Activated CD4-positive, alpha-beta memory T cell treated with anti-CD3 and anti-CD28 coated beads, Interleukin-2, amount 10 ng/mL, durations not matched to agents 7 days and 5 days (primary cell): ENCODE measurements at regions of chr1 and their contacts with region 1.

Region 1: DNA sequence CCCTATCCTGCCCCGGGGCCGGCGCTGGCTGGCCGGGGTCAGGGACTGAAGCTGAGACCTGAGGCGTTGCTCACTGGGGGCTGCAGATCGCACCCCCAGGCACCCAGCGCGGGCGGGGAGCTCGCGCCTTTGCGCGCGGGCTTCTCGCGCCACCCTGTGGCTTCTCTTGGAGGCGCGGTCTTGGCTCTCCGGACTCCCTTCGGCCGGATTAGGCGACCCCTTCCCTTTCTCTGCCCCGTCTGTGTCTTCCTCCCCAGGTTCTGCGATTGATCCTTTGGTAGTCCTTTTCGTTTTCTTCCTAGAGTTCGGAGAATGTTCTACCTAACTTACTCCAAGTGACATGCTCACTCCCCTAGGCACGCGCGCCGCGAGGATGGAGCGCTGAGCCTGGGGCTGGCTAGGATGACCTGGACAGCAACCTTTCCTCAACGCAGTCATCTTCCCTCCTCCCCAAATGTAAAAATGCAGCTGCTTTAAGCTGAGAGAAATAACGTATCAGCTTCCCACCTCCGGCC is 495 bp upstream of the NTRK1 start:
- DNase-seq: peak; percentile 64
- H3K4me3 Mint-ChIP-seq: peak overlapping the region; percentile 74
- H3K27ac Mint-ChIP-seq: no peak overlapping the region
- H3K4me1 Mint-ChIP-seq: peaks cover 52% of the 10 kb centered on the region
- H3K27me3 Mint-ChIP-seq: peaks cover 72% of the 10 kb centered on the region

Region 2: DNA sequence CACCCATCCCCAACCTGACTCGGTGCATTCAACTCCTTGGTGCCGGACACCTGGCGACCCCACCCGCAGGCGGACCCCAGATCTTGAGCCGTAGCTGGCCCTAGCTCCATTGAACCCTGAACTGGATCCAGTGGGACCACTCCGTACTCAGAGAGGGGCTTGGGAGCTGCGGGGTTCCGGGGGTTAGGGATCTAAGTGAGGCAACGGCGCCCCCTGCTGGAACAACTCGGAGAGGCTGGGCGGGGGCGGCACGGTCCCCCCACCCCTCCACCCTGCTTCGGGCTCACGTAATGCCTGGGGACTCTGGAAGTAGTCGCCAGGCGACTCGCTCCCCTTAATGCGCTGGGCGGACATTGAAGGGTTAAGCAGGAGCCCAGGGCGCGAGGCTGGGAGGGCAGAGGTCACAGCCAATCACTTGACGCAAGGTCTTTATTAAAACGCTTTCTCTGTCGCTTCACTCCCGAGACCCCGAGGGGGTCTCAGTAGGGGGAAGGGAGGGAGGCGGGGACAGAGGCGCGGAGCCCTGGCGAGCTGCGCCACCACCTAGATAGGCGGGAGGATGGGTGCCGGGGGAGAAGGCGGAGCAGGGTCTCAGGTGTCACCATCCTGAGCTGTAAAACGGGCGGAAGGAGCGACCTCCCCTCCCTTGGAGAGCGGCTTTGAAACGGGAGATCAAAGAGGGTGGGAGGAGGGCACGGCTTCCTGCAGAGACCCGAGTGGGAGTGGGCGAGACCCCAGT is 154.1 kb before region 1 on chr1:
- CTCF ChIA-PET with region 1: interaction called, 19 read pairs
- POLR2A ChIA-PET with region 1: no interaction called
- DNase-seq: peak; percentile 69
- H3K4me3 Mint-ChIP-seq: peak overlapping the region; percentile 70
- H3K27ac Mint-ChIP-seq: no peak overlapping the region
- H3K4me1 Mint-ChIP-seq: peaks cover 21% of the 10 kb centered on the region
- H3K27me3 Mint-ChIP-seq: peaks cover 38% of the 10 kb centered on the region

Region 3: GRCh38 chr1:156767101-156767878 is 92.9 kb before region 1 on chr1 and contains the start of gene PRCC:
- CTCF ChIA-PET with region 1: interaction called, 16 read pairs
- POLR2A ChIA-PET with region 1: interaction called, 7 read pairs
- DNase-seq: peak; percentile 99
- H3K4me3 Mint-ChIP-seq: no peak within 1 kb of the TSS
- H3K27ac Mint-ChIP-seq: no peak within 1 kb of the TSS
- H3K4me1 Mint-ChIP-seq: peaks cover 40% of the 10 kb centered on the region
- H3K27me3 Mint-ChIP-seq: no peaks in the 10 kb centered on the region
- total RNA-seq, gene PRCC: 61.6 to 74.1 TPM

Region 4: GRCh38 chr1:156804572-156805243 is 55.5 kb before region 1 on chr1:
- CTCF ChIA-PET with region 1: interaction called, 238 read pairs
- POLR2A ChIA-PET with region 1: interaction called, 52 read pairs
- DNase-seq: no peak
- H3K4me3 Mint-ChIP-seq: no peak overlapping the region
- H3K27ac Mint-ChIP-seq: peak overlapping the region; percentile 61
- H3K4me1 Mint-ChIP-seq: peaks cover 87% of the 10 kb centered on the region
- H3K27me3 Mint-ChIP-seq: no peaks in the 10 kb centered on the region

Region 5: DNA sequence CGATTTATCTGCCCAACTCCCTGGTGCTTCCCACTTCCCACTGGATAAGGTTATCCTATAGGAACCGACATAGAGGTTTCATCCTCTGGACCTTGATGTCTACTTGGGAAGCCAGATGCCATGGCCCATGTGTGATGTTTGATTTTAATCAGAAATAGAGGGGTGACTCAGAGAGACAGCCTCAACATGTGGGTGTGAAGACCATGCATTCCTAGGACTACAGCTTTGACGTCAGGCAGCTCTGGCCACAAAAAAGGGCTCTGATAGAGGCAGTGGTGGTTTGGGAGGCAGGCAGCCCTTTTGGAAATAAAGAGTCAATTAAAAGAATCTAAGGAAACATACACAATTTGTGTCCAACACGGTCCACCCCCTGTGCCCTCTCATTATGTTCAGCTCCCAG is 38.4 kb before region 1 on chr1:
- CTCF ChIA-PET with region 1: interaction called, 83 read pairs
- POLR2A ChIA-PET with region 1: interaction called, 12 read pairs
- DNase-seq: no peak
- H3K4me3 Mint-ChIP-seq: no peak overlapping the region
- H3K27ac Mint-ChIP-seq: no peak overlapping the region
- H3K4me1 Mint-ChIP-seq: peaks cover 38% of the 10 kb centered on the region
- H3K27me3 Mint-ChIP-seq: peaks cover 12% of the 10 kb centered on the region

Region 6: GRCh38 chr1:156848461-156849150 is 11.6 kb before region 1 on chr1:
- CTCF ChIA-PET with region 1: interaction called, 32 read pairs
- POLR2A ChIA-PET with region 1: interaction called, 9 read pairs
- DNase-seq: peak; percentile 85
- H3K4me3 Mint-ChIP-seq: peak overlapping the region; percentile 40
- H3K27ac Mint-ChIP-seq: peak overlapping the region; percentile 20
- H3K4me1 Mint-ChIP-seq: peaks cover 32% of the 10 kb centered on the region
- H3K27me3 Mint-ChIP-seq: peaks cover 64% of the 10 kb centered on the region

Region 7: DNA sequence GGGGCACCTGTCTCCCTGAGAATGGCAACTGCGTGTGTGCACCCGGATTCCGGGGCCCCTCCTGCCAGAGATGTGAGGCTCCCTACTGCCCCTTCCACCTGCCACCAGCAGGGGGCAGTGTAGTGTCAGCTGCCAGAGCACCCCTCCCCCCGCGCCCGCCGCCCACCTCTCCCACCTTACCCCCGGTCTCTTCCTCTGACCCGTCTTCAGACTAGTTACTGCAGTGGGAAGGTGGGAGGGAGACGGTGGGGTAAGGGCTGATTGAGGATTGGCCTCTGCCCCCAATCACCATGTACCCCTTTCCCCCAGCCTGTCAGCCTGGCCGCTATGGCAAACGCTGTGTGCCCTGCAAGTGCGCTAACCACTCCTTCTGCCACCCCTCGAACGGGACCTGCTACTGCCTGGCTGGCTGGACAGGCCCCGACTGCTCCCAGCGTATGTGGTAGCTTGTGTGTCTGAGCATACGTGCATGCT is 50.2 kb after region 1 on chr1:
- CTCF ChIA-PET with region 1: no interaction called
- POLR2A ChIA-PET with region 1: no interaction called
- DNase-seq: peak; percentile 66
- H3K4me3 Mint-ChIP-seq: no peak overlapping the region
- H3K27ac Mint-ChIP-seq: no peak overlapping the region
- H3K4me1 Mint-ChIP-seq: no peaks in the 10 kb centered on the region
- H3K27me3 Mint-ChIP-seq: peaks cover 10% of the 10 kb centered on the region